ENCODE measurements at regions of chr10 and their contacts with region 1.

Region 1: DNA sequence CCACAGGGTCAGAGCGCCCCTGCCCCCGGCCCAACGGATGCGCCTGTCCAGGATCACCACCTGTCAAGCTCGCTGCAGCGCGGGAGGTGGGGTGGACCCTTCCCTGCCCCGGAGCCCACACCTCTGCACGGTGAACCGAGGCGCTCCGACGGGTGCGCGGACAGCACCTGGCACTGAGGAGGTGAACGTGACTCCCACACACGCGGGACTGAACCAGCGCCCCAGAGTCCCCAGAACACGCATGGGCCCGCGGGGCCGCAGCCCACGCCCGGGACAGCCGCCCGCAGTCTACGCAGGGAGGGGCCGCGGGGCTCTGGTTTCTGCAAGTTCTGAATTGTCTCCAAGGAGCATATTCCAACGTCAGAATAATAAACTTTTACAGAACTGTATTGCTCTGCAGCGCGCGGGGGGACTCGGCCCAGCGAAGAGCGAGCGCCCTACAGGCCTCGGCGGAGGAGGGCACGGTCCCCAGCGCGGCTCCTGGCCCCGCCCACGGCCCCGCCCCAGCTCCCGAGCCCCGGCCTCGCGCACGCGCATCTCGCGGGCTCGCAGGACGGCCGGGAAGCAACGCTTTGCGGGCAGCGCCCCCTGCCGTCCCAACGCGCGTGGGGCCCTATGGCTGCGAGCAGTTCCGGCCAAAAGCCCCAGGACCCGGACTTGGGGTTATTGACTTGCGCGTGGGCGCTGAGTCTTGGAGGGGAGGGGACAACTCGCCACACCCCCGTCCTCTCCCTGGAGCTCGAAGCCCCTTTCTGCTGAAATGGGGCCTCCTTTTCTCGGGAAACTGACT is 29.7 kb downstream of the OAT start:
- H3K4me3 Mint-ChIP-seq: peak overlapping the region; percentile 53
- H3K27ac Mint-ChIP-seq: no peak overlapping the region
- H3K4me1 Mint-ChIP-seq: peaks cover 3% of the 10 kb centered on the region
- H3K27me3 Mint-ChIP-seq: peaks cover 20% of the 10 kb centered on the region

Region 2: GRCh38 chr10:123994417-123995081 is 394.5 kb before region 1 on chr10:
- intact Hi-C with region 1: loop called (anchors 1 kb)
- H3K4me3 Mint-ChIP-seq: peak overlapping the region; percentile 56
- H3K27ac Mint-ChIP-seq: peak overlapping the region; percentile 71
- H3K4me1 Mint-ChIP-seq: peaks cover 65% of the 10 kb centered on the region
- H3K27me3 Mint-ChIP-seq: peaks cover 55% of the 10 kb centered on the region

Region 3: DNA sequence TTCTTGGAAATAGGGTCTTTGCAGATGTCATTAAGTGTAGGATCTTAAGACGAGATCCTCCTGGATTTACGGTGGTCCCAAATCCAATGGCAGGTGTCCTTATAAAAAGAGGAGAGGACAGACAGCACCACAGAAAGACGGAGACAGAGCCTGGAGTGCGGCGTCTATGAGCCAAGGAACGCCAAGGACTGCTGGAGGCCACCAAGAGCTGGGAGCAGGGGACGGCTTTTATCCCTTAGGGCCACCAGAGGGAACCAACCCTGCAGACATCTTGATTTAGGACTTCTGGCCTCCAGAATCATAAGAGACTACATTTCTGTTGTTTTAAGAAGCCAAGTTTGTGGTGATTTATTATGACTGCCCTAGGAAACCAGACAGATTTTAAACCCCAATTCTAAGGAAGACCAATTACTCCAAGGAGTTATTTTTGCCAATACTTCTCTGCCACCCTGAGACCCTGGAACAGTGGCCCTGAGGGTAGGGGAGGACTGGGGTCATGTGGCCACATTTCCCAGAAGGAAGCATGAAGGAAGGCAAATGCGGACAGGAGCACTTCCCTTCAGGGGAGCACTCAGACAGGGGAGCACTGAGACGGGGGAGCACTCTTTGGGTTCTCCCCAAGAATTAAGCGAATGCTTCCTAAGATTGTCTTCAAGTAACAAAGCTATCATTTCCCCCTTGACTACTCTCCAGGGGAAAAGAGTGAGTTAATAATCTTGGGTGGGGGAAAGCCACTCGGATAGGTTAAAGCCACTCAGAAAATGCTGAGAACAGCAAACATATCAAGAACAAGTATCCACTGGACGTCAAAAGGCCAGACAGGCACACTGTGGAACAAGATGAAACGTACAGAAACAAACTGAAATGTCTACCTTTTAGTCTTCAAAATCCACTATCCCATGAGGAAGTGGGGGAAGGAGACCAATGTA is 363.1 kb before region 1 on chr10:
- intact Hi-C with region 1: loop called (anchors 1 kb)
- H3K4me3 Mint-ChIP-seq: no peak overlapping the region
- H3K27ac Mint-ChIP-seq: peak overlapping the region; percentile 33
- H3K4me1 Mint-ChIP-seq: peaks cover 24% of the 10 kb centered on the region
- H3K27me3 Mint-ChIP-seq: peaks cover 33% of the 10 kb centered on the region

Region 4: DNA sequence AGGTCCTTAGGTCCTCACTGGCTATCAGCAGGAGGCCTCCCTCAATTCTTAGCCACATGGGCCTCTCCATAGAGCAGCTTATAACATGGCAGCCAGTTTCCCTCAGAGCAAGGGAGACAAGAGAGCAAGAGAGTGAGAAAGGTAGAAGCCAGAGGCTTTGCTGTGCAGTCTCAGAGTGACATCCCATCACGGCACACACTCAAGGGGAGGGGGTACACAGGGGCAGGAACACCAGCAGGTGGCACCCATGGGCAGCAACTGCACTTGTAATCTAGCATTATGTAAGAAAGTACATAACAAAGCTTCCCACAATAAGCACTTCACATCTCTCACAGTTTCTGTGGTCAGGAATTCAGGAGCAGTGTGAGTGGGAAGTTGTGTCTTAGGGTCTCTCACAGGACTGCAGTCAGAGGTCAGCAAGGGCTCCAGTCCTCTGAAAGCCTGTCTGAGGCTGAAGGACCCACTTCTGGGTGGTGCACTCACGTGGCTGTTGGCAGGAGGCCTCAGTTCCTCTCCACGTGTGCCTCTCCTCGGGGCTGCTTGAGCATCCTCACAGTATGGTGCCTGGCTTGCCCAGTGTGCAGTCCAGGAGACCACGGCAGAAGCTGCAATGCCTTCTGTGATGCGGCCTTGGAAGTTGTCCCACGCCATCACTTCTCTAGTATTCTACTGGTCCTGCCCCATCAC is 129.7 kb before region 1 on chr10:
- intact Hi-C with region 1: loop called (anchors 10 kb)
- H3K4me3 Mint-ChIP-seq: no peak overlapping the region
- H3K27ac Mint-ChIP-seq: no peak overlapping the region
- H3K4me1 Mint-ChIP-seq: peaks cover 27% of the 10 kb centered on the region
- H3K27me3 Mint-ChIP-seq: peaks cover 8% of the 10 kb centered on the region

Measured in dendritic cell treated with granulocyte-macrophage colony-stimulating factor and Interleukin-4, amounts not matched to agents 40 ng/mL and 50 ng/mL, for 4 days (primary cell).